ENCODE measurements at regions of chr14 and their contacts with region 1.

Region 1: GRCh38 chr14:35229495-35230089 is 62.6 kb upstream of the PSMA6 start:
- DNase-seq: peak; percentile 57
- ATAC-seq: peak; percentile 36
- H3K4me3 ChIP-seq: no peak overlapping the region
- H3K4me3 Mint-ChIP-seq: no peak overlapping the region
- H3K27ac ChIP-seq: no peak overlapping the region
- H3K27ac Mint-ChIP-seq: no peak overlapping the region
- H3K4me1 ChIP-seq: no peaks in the 10 kb centered on the region
- H3K4me1 Mint-ChIP-seq: no peaks in the 10 kb centered on the region
- H3K27me3 ChIP-seq: no peaks in the 10 kb centered on the region
- H3K27me3 Mint-ChIP-seq: no peaks in the 10 kb centered on the region
- CTCF ChIP-seq: peak; percentile 67

Region 2: DNA sequence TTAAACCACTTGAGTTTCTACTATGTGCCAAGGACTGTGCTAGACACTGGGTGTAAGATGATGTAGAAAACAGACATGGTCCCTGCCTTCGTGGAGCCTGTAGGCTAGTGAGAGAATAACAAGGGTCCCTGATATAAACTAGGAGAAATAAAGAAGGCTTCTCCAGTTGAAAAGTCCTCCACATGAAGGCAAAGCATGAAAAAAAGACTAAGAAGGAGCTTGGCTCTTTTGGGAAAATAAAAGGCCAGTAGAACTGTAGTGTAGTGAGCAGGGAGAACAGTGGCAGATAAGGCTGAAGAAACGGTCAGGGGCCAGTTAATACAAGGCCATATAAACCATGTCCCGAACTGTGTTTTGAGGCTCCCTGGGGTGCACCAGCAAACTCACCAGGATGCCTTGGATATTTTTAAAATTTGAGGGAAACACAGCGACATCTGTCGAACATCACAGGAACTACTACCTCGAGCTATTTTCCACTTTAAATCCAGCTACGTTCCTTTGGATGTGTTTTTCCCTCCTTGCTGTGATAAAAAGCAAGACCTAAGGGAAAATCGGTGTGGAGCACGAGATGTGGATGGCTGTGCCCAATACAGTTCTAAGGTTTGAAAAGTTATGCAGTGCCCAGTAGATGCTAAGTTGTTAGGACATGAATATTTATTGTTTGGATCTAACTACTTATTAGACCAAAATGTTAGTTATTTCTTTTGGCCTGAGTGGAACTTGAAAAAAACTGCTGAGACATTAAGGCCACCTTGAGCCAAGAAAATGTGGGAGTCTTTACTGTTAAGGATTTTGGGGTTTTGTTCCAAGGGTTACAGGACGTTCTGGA is 506.7 kb before region 1 on chr14:
- CTCF ChIA-PET with region 1: no interaction called
- POLR2A ChIA-PET with region 1: no interaction called
- intact Hi-C with region 1: no loop called
- DNase-seq: peak; percentile 64
- ATAC-seq: peak; percentile 58
- H3K4me3 ChIP-seq: no peak overlapping the region
- H3K4me3 Mint-ChIP-seq: no peak overlapping the region
- H3K27ac ChIP-seq: no peak overlapping the region
- H3K27ac Mint-ChIP-seq: no peak overlapping the region
- H3K4me1 ChIP-seq: peaks cover 0 to 5% of the 10 kb centered on the region in 2 donors
- H3K4me1 Mint-ChIP-seq: peaks cover 5% of the 10 kb centered on the region
- H3K27me3 ChIP-seq: no peaks in the 10 kb centered on the region
- H3K27me3 Mint-ChIP-seq: no peaks in the 10 kb centered on the region
- CTCF ChIP-seq: peak; percentile 94

Region 3: GRCh38 chr14:35215110-35215876 is 14.3 kb before region 1 on chr14:
- CTCF ChIA-PET with region 1: interaction called, 12 read pairs
- POLR2A ChIA-PET with region 1: no interaction called
- intact Hi-C with region 1: no loop called
- DNase-seq: peak; percentile 30
- ATAC-seq: no peak
- H3K4me3 ChIP-seq: no peak overlapping the region
- H3K4me3 Mint-ChIP-seq: no peak overlapping the region
- H3K27ac ChIP-seq: no peak overlapping the region
- H3K27ac Mint-ChIP-seq: no peak overlapping the region
- H3K4me1 ChIP-seq: no peaks in the 10 kb centered on the region
- H3K4me1 Mint-ChIP-seq: no peaks in the 10 kb centered on the region
- H3K27me3 ChIP-seq: no peaks in the 10 kb centered on the region
- H3K27me3 Mint-ChIP-seq: no peaks in the 10 kb centered on the region
- CTCF ChIP-seq: peak; percentile 12